Ascending aorta (tissue), 2 donors: ENCODE measurements at regions of chr3 and their contacts with region 1.

Region 1: GRCh38 chr3:39288300-39288808 is 8.5 kb upstream of the CX3CR1 start:
- DNase-seq: peak; percentile 30 to 86
- H3K4me3 ChIP-seq: no peak overlapping the region
- H3K27ac ChIP-seq: no peak overlapping the region
- H3K4me1 ChIP-seq: no peaks in the 10 kb centered on the region
- H3K27me3 ChIP-seq: no peaks in the 10 kb centered on the region
- CTCF ChIP-seq: peak; percentile 88 to 89 (median 88)

Region 2: GRCh38 chr3:39101022-39101689 is 187.2 kb before region 1 on chr3:
- intact Hi-C with region 1: loop called (anchors 2 kb)
- DNase-seq: no peak
- H3K4me3 ChIP-seq: no peak overlapping the region
- H3K27ac ChIP-seq: no peak overlapping the region
- H3K4me1 ChIP-seq: peaks cover 0 to 21% of the 10 kb centered on the region in 2 donors
- H3K27me3 ChIP-seq: no peaks in the 10 kb centered on the region
- CTCF ChIP-seq: peak; percentile 36 to 57 (median 36)

Region 3: GRCh38 chr3:39126532-39127071 is 161.8 kb before region 1 on chr3:
- intact Hi-C with region 1: loop called (anchors 1 kb)
- DNase-seq: no peak
- H3K4me3 ChIP-seq: no peak overlapping the region
- H3K27ac ChIP-seq: no peak overlapping the region
- H3K4me1 ChIP-seq: peaks cover 0 to 8% of the 10 kb centered on the region in 2 donors
- H3K27me3 ChIP-seq: no peaks in the 10 kb centered on the region
- CTCF ChIP-seq: peak; percentile 41 to 67 (median 57)

Region 4: DNA sequence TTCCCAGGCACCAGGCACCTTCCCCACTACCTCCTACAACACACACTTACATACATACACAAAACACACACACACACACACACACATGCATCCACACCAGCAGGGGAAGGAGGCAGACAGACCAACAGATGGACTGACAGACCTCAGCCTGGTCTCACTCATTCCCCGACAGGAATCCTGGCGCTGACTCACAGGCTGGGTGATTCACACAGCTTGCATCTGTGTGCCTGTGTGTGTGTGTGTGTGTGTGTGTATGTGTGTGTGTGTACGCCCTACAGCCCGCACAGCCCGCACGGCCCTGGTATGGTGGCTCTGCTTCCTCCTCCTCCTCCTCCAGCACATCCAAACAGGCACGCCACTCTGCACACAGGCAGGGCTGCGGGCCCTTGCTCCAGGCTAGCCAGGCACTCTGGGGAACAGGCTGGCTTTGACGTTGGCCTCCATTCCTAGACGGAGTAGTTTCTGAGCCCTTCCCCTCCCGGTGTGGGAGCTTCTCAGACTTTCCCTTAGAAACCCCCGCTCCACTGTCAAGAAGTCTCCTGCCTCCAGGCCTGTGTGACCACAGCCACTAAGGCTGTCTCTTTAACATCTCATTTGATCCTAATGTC is 141.3 kb before region 1 on chr3:
- intact Hi-C with region 1: no loop called
- DNase-seq: peak; percentile 81 to 95
- H3K4me3 ChIP-seq: peak overlapping the region; percentile 36 to 91
- H3K27ac ChIP-seq: peak overlapping the region; percentile 97 to 99
- H3K4me1 ChIP-seq: peaks cover 44 to 54% of the 10 kb centered on the region in 2 donors
- H3K27me3 ChIP-seq: no peaks in the 10 kb centered on the region
- CTCF ChIP-seq: peak in 1 of 3 experiments; percentile 18

Region 5: DNA sequence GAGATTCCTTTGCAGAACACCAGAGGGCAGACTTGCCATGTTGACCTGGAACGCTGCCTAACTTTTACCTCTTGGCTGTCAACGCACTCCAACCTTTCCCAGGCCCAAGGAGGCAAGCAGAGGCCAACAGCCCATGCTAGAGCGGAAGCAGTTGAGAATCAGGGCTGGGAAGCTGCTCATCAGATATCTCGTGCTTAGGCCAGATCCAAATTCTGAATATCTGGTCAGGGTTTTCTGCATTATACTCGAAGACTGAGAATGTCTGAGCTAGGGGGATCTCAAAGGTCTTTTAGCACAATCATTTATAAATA is 98.4 kb before region 1 on chr3:
- intact Hi-C with region 1: loop called (anchors 1 kb)
- DNase-seq: peak in 1 of 2 donors; percentile 80
- H3K4me3 ChIP-seq: no peak overlapping the region
- H3K27ac ChIP-seq: no peak overlapping the region
- H3K4me1 ChIP-seq: no peaks in the 10 kb centered on the region
- H3K27me3 ChIP-seq: no peaks in the 10 kb centered on the region
- CTCF ChIP-seq: peak; percentile 75 to 84 (median 76)

Region 6: GRCh38 chr3:39208463-39209055 is 79.8 kb before region 1 on chr3:
- intact Hi-C with region 1: loop called (anchors 2 kb)
- DNase-seq: no peak
- H3K4me3 ChIP-seq: no peak overlapping the region
- H3K27ac ChIP-seq: no peak overlapping the region
- H3K4me1 ChIP-seq: no peaks in the 10 kb centered on the region
- H3K27me3 ChIP-seq: no peaks in the 10 kb centered on the region
- CTCF ChIP-seq: peak in 1 of 3 experiments; percentile 59

Region 7: DNA sequence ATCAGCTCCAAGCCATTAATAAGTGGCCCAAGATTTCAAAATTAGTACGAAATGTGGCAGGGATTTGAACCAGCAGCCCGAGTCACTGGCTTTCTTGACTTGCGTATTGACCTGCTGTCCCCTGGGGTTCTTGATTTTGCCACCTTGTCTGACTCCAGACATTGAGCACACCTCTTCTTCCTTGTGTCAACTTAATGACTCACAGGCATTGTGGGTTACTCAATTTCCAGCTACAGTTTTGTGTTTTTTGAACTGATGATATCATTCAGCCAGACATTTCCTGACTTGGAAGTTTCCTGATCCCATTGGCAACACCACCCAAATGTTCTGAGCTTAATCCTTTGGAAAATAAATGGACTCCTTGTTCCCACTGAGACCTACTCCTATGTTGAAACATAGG is 243.3 kb after region 1 on chr3:
- intact Hi-C with region 1: no loop called
- DNase-seq: peak in 1 of 2 donors; percentile 66
- H3K4me3 ChIP-seq: no peak overlapping the region
- H3K27ac ChIP-seq: peak overlapping the region; percentile 22 to 72
- H3K4me1 ChIP-seq: peaks cover 0 to 3% of the 10 kb centered on the region in 2 donors
- H3K27me3 ChIP-seq: no peaks in the 10 kb centered on the region
- CTCF ChIP-seq: no peak